CD14-positive monocyte (primary cell): ENCODE measurements at regions of chr16 and their contacts with region 1.

Region 1: GRCh38 chr16:9008601-9009260 is 45.0 kb upstream of the USP7 start:
- DNase-seq: peak; percentile 56 to 67 (median 57)
- H3K4me3 ChIP-seq: peak overlapping the region in 2 of 3 experiments; percentile 9 to 62
- H3K4me3 Mint-ChIP-seq: peak overlapping the region; percentile 54 to 80
- H3K27ac ChIP-seq: no peak overlapping the region
- H3K27ac Mint-ChIP-seq: peak overlapping the region in 1 of 7 donors; percentile 36
- H3K4me1 ChIP-seq: peaks cover 7 to 8% of the 10 kb centered on the region in 2 donors
- H3K4me1 Mint-ChIP-seq: peaks cover 8% of the 10 kb centered on the region
- H3K27me3 ChIP-seq: peaks cover 0 to 13% of the 10 kb centered on the region in 2 donors
- H3K27me3 Mint-ChIP-seq: peaks cover 16 to 30% (median 23%) of the 10 kb centered on the region in 3 donors
- CTCF ChIP-seq: peak; percentile 83

Region 2: GRCh38 chr16:8685994-8686621 is 322.6 kb before region 1 on chr16:
- intact Hi-C with region 1: no loop called
- DNase-seq: no peak
- H3K4me3 ChIP-seq: no peak overlapping the region
- H3K4me3 Mint-ChIP-seq: no peak overlapping the region
- H3K27ac ChIP-seq: no peak overlapping the region
- H3K27ac Mint-ChIP-seq: no peak overlapping the region
- H3K4me1 ChIP-seq: no peaks in the 10 kb centered on the region
- H3K4me1 Mint-ChIP-seq: no peaks in the 10 kb centered on the region
- H3K27me3 ChIP-seq: no peaks in the 10 kb centered on the region
- H3K27me3 Mint-ChIP-seq: peaks cover 0 to 4% (median 0%) of the 10 kb centered on the region in 3 donors
- CTCF ChIP-seq: no peak

Region 3: DNA sequence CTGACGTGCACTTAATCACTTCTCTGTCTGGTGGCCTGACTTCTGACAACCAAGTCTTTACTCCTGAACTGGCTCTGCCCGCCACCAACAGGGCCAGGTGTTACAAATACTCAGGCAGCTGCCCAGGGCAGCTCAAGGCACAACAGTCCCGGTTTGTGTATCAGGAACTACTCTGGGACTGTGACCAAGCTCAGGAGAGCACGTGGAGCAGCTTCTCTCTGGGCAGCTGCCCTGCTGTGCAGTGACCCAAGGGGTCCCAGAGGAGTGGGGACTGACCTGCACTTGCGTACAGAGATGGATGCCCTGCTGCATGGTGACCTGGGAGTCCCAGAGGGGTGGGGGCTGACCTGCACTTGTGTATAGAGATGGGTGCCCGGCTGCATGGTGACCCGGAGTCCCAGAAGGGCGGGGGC is 104.7 kb before region 1 on chr16:
- intact Hi-C with region 1: no loop called
- DNase-seq: no peak
- H3K4me3 ChIP-seq: no peak overlapping the region
- H3K4me3 Mint-ChIP-seq: no peak overlapping the region
- H3K27ac ChIP-seq: no peak overlapping the region
- H3K27ac Mint-ChIP-seq: no peak overlapping the region
- H3K4me1 ChIP-seq: peaks cover 18 to 19% of the 10 kb centered on the region in 2 donors
- H3K4me1 Mint-ChIP-seq: peaks cover 19% of the 10 kb centered on the region
- H3K27me3 ChIP-seq: no peaks in the 10 kb centered on the region
- H3K27me3 Mint-ChIP-seq: no peaks in the 10 kb centered on the region
- CTCF ChIP-seq: no peak

Region 4: DNA sequence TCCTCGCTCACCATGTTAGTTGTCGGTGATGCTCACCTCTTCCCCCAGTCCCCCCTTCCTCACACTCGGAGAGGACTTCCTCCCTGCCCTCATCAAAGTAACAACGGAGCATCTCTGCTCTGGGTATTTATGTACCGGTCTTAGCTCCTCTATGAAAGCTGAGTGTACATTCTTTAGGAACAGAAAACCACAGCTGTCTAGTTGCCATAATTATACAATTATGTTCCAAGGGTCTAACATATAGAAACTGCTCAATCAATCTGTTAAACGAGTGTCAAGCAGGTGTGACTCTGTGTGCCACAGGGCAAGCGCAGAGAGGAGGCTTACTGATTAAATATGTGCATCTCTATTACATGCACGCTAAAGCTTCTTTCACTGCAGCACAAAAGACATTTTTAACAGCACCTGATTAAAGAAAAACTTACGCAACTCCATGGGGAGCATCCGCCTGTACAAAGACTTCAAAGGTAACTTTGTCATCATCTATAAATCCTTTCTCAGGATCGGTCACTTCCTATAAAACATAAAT is 88.7 kb before region 1 on chr16:
- intact Hi-C with region 1: loop called in 1 of 2 experiments (anchors 10 kb)
- DNase-seq: no peak
- H3K4me3 ChIP-seq: no peak overlapping the region
- H3K4me3 Mint-ChIP-seq: no peak overlapping the region
- H3K27ac ChIP-seq: no peak overlapping the region
- H3K27ac Mint-ChIP-seq: no peak overlapping the region
- H3K4me1 ChIP-seq: no peaks in the 10 kb centered on the region
- H3K4me1 Mint-ChIP-seq: peaks cover 2% of the 10 kb centered on the region
- H3K27me3 ChIP-seq: no peaks in the 10 kb centered on the region
- H3K27me3 Mint-ChIP-seq: peaks cover 0 to 3% (median 0%) of the 10 kb centered on the region in 3 donors
- CTCF ChIP-seq: no peak

Region 5: DNA sequence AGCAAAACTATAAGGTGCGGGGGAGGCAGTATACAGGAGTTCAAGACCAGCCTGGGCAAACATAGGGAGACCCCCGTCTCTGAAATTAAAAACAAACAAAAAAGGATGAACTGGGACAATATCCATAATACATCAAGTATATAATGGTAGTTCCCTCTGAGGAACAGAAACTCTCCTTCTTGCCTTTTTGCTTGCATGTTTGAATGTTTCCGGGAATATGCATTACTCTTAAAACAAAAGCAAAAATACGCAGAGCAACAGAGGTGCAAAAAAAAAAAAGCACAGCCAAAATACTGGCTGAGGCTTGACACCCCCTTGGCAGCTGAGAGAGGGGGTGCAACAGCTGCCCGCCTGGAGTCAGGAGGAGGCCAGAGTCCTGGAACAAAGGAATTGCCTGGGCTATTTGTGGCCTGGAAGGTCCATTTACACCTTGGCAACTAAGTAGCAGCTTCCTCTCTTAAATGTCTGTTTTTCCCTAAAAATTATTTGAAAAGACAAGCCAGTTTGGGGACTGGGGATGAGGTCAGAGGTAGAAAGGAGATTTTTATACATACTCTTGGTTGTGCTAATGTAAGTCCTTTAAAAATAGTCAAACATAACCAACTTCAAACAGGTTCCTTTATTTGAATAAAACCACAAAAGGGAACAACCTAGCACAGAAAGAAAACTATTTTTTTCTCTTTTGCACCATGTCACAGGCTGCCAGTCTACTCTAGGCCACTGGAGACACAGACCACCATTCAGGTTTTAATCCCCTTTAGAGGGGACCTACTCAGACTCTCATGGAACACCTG is 64.6 kb before region 1 on chr16:
- intact Hi-C with region 1: loop called in 1 of 2 experiments (anchors 10 kb)
- DNase-seq: peak; percentile 17 to 58 (median 27)
- H3K4me3 ChIP-seq: peak overlapping the region in 2 of 3 experiments; percentile 12 to 64
- H3K4me3 Mint-ChIP-seq: peak overlapping the region; percentile 69 to 85
- H3K27ac ChIP-seq: peak overlapping the region; percentile 55 to 56
- H3K27ac Mint-ChIP-seq: peak overlapping the region; percentile 80 to 90 (median 88)
- H3K4me1 ChIP-seq: peaks cover 48 to 76% of the 10 kb centered on the region in 2 donors
- H3K4me1 Mint-ChIP-seq: peaks cover 88% of the 10 kb centered on the region
- H3K27me3 ChIP-seq: no peaks in the 10 kb centered on the region
- H3K27me3 Mint-ChIP-seq: no peaks in the 10 kb centered on the region
- CTCF ChIP-seq: no peak

Region 6: GRCh38 chr16:9039210-9039609 is 30.5 kb after region 1 on chr16:
- intact Hi-C with region 1: no loop called
- DNase-seq: no peak
- H3K4me3 ChIP-seq: no peak overlapping the region
- H3K4me3 Mint-ChIP-seq: no peak overlapping the region
- H3K27ac ChIP-seq: no peak overlapping the region
- H3K27ac Mint-ChIP-seq: no peak overlapping the region
- H3K4me1 ChIP-seq: no peaks in the 10 kb centered on the region
- H3K4me1 Mint-ChIP-seq: no peaks in the 10 kb centered on the region
- H3K27me3 ChIP-seq: no peaks in the 10 kb centered on the region
- H3K27me3 Mint-ChIP-seq: peaks cover 6 to 11% (median 8%) of the 10 kb centered on the region in 3 donors
- CTCF ChIP-seq: no peak